Endothelial cell of umbilical vein (primary cell): ENCODE measurements at regions of chr1 and their contacts with region 1.

Region 1: DNA sequence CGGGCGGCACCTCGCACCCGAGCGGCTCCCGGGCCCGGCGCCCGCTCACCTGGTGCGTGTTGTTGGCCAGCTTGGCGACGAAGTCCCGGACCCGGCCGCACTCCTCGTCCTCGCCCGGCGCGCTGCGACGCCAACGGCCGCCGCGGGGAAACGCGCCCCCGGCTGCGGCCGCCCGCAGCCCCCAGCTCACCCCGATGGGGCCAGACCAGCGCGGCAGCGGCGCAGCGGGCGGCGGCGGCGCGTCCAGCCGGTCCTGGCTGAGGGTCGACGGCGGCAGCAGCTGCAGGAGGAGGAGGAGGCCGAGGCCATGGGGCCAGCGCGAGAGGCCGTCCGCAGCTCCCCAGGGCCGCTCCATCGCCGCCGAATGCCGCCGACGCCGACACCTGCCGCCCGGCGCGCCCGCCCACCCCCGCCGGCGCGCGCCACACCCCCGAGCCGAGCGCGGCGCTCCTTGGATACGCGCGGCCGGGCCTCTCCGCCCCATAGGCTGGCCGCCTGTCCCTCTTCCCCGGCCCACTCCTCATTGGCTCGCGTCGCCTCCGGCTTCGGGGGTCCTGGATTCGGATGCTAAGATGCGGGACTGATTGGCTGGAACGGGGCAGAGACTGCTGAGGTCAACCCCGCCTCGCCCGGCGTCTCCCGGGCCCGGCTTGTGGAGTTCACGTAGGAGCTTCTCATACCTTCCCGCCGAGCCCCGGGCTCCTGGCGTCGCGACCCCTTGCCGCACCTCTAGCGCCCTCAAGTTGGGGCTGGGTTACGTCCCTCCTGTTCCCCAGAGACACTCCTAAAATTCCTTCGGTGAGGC is at the start of gene SORT1:
- DNase-seq: peak; percentile 91
- H3K4me3 ChIP-seq: peak within 1 kb of the TSS; percentile 15 to 51 (median 44)
- H3K27ac ChIP-seq: no peak within 1 kb of the TSS
- H3K4me1 ChIP-seq: peaks cover 15% of the 10 kb centered on the region
- H3K27me3 ChIP-seq: peaks cover 13 to 19% of the 10 kb centered on the region in 2 experiments
- CTCF ChIP-seq: no peak
- POLR2A ChIP-seq: no peak
- total RNA-seq, gene SORT1: 16.8 and 17.8 TPM in 2 replicates

Region 2: GRCh38 chr1:108828022-108828961 is 569.4 kb before region 1 on chr1:
- CTCF ChIA-PET with region 1: no interaction called
- POLR2A ChIA-PET with region 1: no interaction called
- dilution Hi-C with region 1: no loop called
- intact Hi-C with region 1: loop called (anchors 5 kb)
- DNase-seq: peak; percentile 70
- H3K4me3 ChIP-seq: no peak overlapping the region
- H3K27ac ChIP-seq: no peak overlapping the region
- H3K4me1 ChIP-seq: peaks cover 29% of the 10 kb centered on the region
- H3K27me3 ChIP-seq: peaks cover 0 to under 1% of the 10 kb centered on the region in 2 experiments
- CTCF ChIP-seq: peak; percentile 64 to 74
- POLR2A ChIP-seq: no peak

Region 3: DNA sequence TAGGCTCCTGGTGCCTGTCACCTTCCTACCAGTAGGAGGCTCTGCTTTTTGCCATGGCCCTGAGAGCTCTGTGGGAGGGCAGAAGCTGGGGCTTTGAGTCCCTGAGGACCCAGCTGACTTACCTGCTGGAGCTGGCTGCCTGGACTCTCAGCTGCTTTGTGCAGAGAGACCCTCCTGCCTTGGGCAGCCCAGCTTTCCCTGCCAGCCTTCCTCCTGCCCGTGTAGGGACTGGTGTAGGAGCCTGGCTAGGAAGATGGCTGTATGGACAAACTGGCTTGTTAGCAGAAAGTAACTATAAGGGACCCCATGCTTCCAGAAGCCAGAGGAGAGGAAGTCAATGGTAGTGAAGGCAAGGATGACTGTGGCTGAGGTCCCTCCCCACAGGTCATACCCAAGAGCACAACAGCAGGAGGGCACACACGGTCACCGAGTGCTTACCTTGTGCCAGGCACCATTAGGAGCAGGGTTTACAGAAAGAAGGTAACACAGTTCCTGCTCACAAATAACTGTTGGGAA is 158.1 kb before region 1 on chr1:
- CTCF ChIA-PET with region 1: interaction called, 41 read pairs
- POLR2A ChIA-PET with region 1: no interaction called
- dilution Hi-C with region 1: no loop called
- intact Hi-C with region 1: no loop called
- DNase-seq: peak; percentile 18
- H3K4me3 ChIP-seq: no peak overlapping the region
- H3K27ac ChIP-seq: no peak overlapping the region
- H3K4me1 ChIP-seq: no peaks in the 10 kb centered on the region
- H3K27me3 ChIP-seq: peaks cover 12 to 17% of the 10 kb centered on the region in 2 experiments
- CTCF ChIP-seq: peak; percentile 44 to 47
- POLR2A ChIP-seq: no peak

Region 4: DNA sequence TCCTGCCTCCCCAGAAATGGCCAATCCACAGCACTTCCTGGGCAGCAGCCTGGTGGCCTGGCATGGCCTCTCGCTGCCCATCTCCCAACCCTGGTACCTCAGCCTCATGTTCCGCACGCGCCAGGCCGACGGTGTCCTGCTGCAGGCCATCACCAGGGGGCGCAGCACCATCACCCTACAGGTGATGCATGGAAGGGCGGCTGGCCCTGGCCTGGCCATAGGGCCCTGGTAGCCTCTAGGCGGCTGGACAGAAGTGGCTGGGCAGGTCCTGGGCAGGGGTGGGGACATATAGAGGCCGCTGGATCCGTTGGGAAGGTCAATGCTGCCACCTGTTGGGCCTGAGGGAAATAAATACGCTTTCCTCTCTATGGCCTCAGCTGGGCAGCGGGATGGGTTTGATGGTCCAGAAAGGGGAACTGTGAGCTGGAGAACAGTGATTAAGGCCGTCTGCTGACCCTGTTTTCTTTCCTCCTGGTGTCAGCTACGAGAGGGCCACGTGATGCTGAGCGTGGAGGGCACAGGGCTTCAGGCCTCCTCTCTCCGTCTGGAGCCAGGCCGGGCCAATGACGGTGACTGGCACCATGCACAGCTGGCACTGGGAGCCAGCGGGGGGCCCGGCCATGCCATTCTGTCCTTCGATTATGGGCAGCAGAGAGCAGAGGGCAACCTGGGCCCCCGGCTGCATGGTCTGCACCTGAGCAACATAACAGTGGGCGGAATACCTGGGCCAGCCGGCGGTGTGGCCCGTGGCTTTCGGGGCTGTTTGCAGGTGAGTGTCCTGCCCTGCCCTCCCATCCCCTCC is 133.9 kb before region 1 on chr1:
- CTCF ChIA-PET with region 1: interaction called, 124 read pairs
- POLR2A ChIA-PET with region 1: no interaction called
- dilution Hi-C with region 1: no loop called
- intact Hi-C with region 1: loop called (anchors 1 kb)
- DNase-seq: peak; percentile 82
- H3K4me3 ChIP-seq: no peak overlapping the region
- H3K27ac ChIP-seq: no peak overlapping the region
- H3K4me1 ChIP-seq: no peaks in the 10 kb centered on the region
- H3K27me3 ChIP-seq: no peaks in the 10 kb centered on the region
- CTCF ChIP-seq: peak; percentile 100
- POLR2A ChIP-seq: no peak

Region 5: DNA sequence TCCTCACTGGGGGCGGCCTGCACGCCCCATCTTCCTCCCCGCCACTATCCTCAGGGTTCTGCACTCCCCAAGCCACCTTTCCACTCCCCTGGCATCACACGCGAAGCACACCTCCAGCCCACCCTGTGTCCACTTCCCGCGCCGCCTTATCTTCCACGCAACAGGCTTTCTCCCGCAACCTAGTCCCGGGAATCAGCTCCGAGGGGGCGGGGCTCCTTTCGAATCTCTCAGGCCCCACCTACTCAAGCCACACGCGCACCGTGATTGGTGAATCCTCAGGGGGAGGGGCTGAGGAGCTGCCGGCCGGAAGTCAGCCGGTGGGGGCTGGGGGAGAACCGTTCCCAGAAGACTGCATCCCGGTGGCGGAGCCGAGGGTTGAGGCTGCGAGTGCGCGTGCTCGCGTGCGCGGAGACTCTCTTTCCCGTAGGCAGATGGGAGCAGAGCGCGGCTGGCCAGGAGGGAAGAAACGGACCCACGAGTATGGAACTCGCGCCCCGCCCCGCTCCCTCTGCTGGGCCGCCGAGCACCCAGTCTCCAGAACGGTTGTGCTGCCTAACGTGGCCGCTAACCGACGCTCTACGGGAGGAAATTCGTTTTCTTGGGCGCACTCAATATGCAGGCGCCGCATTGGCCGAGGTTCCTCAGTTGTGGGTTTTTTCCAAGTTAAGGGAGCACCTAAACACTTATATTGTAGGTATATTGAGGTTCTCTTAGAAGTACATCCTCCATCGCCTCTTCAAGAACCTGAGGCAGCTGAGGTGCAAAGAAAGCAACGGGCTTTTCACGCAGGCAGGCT is 114.6 kb before region 1 on chr1 and contains the start of gene PSRC1:
- CTCF ChIA-PET with region 1: interaction called, 282 read pairs
- POLR2A ChIA-PET with region 1: interaction called, 3 read pairs
- dilution Hi-C with region 1: no loop called
- intact Hi-C with region 1: loop called (anchors 1 kb)
- DNase-seq: peak; percentile 96
- H3K4me3 ChIP-seq: peak within 1 kb of the TSS; percentile 61 to 81 (median 71)
- H3K27ac ChIP-seq: peak within 1 kb of the TSS; percentile 22
- H3K4me1 ChIP-seq: peaks cover 22% of the 10 kb centered on the region
- H3K27me3 ChIP-seq: no peaks in the 10 kb centered on the region
- CTCF ChIP-seq: peak; percentile 20 to 63
- POLR2A ChIP-seq: no peak
- total RNA-seq, gene PSRC1: 23.4 and 29.3 TPM in 2 replicates